Activated CD8-positive, alpha-beta memory T cell treated with anti-CD3 and anti-CD28 coated beads, Interleukin-2, amount 10 ng/mL, durations not matched to agents 7 days and 5 days (primary cell): ENCODE measurements at regions of chr3 and their contacts with region 1.

Region 1: GRCh38 chr3:38117748-38118420 is 19.0 kb downstream of the ACAA1 start:
- DNase-seq: peak; percentile 84
- ATAC-seq: peak; percentile 87
- H3K4me3 Mint-ChIP-seq: no peak overlapping the region
- H3K27ac Mint-ChIP-seq: no peak overlapping the region
- H3K4me1 Mint-ChIP-seq: peaks cover 4% of the 10 kb centered on the region
- H3K27me3 Mint-ChIP-seq: no peaks in the 10 kb centered on the region

Region 2: GRCh38 chr3:37753428-37753827 is 364.5 kb before region 1 on chr3:
- CTCF ChIA-PET with region 1: no interaction called
- DNase-seq: no peak
- ATAC-seq: peak; percentile 71
- H3K4me3 Mint-ChIP-seq: no peak overlapping the region
- H3K27ac Mint-ChIP-seq: no peak overlapping the region
- H3K4me1 Mint-ChIP-seq: peaks cover 12% of the 10 kb centered on the region
- H3K27me3 Mint-ChIP-seq: peaks cover 51% of the 10 kb centered on the region

Region 3: GRCh38 chr3:38297947-38298711 is 180.2 kb after region 1 on chr3:
- CTCF ChIA-PET with region 1: interaction called, 10 read pairs
- DNase-seq: peak; percentile 7
- ATAC-seq: no peak
- H3K4me3 Mint-ChIP-seq: no peak overlapping the region
- H3K27ac Mint-ChIP-seq: no peak overlapping the region
- H3K4me1 Mint-ChIP-seq: peaks cover 2% of the 10 kb centered on the region
- H3K27me3 Mint-ChIP-seq: peaks cover 27% of the 10 kb centered on the region

Region 4: DNA sequence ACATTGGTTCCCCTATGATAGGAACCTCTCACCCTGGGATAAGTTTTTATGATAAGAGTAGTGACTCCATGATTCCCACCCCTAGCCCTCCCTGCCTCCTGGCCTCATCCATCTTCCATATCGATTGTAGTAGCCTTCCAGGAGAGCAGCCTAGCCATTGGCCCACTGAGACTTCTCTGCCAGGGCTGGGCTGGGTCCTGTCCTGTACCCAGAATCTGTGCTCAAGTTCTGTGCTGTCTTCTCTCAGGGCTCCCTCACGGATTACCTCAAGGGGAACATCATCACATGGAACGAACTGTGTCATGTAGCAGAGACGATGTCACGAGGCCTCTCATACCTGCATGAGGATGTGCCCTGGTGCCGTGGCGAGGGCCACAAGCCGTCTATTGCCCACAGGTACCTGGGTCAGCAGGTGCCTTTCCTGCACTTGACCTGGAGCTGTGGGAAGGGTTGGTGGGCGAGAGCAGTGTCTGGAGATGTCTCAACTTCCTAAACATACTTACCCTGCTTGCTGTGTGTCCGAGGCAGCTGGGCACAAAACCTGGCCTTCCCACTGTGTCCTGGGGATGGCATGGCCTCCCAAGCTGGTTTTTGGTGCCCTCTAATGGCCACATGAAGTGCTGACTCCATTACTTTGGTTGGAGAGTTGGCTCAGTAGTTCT is 361.7 kb after region 1 on chr3:
- CTCF ChIA-PET with region 1: interaction called, 14 read pairs
- DNase-seq: peak; percentile 60
- ATAC-seq: peak; percentile 75
- H3K4me3 Mint-ChIP-seq: no peak overlapping the region
- H3K27ac Mint-ChIP-seq: no peak overlapping the region
- H3K4me1 Mint-ChIP-seq: no peaks in the 10 kb centered on the region
- H3K27me3 Mint-ChIP-seq: no peaks in the 10 kb centered on the region